ENCODE measurements at regions of chr9 and their contacts with region 1.

Region 1: GRCh38 chr9:126490871-126491567 is 122.7 kb upstream of the LMX1B start:
- DNase-seq: no peak
- ATAC-seq: peak in 1 of 2 donors; percentile 71
- H3K4me3 ChIP-seq: no peak overlapping the region
- H3K27ac ChIP-seq: no peak overlapping the region
- H3K4me1 ChIP-seq: no peaks in the 10 kb centered on the region
- H3K27me3 ChIP-seq: no peaks in the 10 kb centered on the region
- CTCF ChIP-seq: peak; percentile 87 to 92 (median 91)
- POLR2A ChIP-seq: no peak

Region 2: DNA sequence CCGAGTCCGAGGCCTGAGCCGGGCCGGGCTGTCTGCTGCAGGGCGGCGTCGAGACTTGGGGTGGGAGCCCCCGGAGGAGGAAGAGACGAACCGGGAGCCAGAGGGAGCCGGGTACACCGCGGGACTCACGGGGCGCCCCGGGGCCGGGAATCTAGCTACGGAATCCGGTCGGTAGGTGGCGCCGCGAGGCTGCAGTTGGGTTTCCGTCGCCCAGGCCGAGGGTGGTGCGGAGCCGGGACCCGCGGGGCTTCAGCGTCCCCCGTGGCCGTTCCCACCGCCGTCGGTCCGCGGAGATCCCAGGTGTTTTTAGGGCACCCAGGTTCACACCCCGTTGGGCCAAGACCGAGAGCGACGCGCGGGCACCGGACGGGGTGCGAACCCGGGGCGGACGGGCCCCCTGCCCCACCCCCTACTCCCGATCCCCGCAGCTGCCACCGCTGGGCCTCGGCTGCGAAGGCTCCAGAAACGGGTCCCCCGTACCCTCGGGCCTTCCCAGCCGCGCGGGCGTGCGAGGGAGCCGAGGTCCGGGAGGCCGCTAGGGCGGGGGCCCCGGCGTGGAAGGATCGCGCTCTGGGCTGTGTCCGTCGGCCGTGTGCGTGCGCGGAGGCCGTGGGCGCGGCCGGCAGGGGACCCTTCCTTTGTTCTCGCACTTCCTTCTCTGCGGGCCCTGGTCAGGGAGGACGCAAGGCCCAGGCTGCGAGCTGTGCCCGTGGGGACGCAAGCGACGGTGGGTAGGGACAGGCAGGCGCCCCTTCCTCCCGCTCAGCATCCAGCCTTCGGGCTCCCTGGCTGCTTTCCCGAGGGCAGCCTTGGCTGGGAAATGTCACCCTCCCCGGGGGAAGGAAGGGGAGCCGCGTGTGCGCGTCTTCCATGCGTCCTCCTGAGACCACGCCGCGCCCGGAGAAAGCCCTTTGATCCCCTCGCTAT is 1082.8 kb before region 1 on chr9:
- in situ Hi-C with region 1: loop called in 2 of 4 experiments (anchors 25 kb)
- intact Hi-C with region 1: loop called (anchors 10 kb)
- DNase-seq: peak; percentile 30 to 34
- ATAC-seq: peak; percentile 65 to 73
- H3K4me3 ChIP-seq: peak overlapping the region; percentile 50 to 59 (median 54)
- H3K27ac ChIP-seq: no peak overlapping the region
- H3K4me1 ChIP-seq: peaks cover 3 to 8% of the 10 kb centered on the region in 2 donors
- H3K27me3 ChIP-seq: peaks cover 17 to 25% (median 24%) of the 10 kb centered on the region in 3 donors
- CTCF ChIP-seq: peak; percentile 24 to 85 (median 69)
- POLR2A ChIP-seq: no peak

Region 3: GRCh38 chr9:126301985-126302603 is 188.9 kb before region 1 on chr9:
- in situ Hi-C with region 1: loop called in 3 of 4 experiments (anchors 5 to 25 kb)
- intact Hi-C with region 1: loop called (anchors 1 kb)
- DNase-seq: peak; percentile 22 to 53
- ATAC-seq: peak; percentile 60 to 71
- H3K4me3 ChIP-seq: no peak overlapping the region
- H3K27ac ChIP-seq: no peak overlapping the region
- H3K4me1 ChIP-seq: no peaks in the 10 kb centered on the region
- H3K27me3 ChIP-seq: peaks cover 0 to 5% (median 0%) of the 10 kb centered on the region in 3 donors
- CTCF ChIP-seq: peak; percentile 46 to 69 (median 62)
- POLR2A ChIP-seq: no peak

Region 4: DNA sequence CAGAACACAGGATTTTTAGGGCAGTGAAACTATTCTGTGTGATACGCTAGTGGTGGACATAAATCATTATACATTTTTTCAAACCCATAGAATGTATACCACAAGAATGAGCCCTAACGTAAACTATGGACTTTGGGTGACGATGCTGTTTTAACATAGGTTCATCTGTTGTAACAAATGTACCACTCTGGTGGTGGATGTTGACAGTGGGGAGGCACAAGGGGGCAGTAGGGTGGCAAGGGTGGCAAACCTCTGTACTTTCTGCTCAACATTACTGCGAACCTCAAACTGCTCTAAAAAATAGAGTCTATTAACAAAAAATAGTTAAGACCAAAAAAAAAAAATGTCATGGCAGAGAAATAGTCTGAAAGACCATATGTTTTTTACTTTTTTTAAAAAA is 173.5 kb before region 1 on chr9:
- in situ Hi-C with region 1: loop called in 3 of 4 experiments (anchors 10 to 25 kb)
- intact Hi-C with region 1: no loop called
- DNase-seq: peak; percentile 44 to 48
- ATAC-seq: peak; percentile 73 to 77
- H3K4me3 ChIP-seq: no peak overlapping the region
- H3K27ac ChIP-seq: no peak overlapping the region
- H3K4me1 ChIP-seq: no peaks in the 10 kb centered on the region
- H3K27me3 ChIP-seq: no peaks in the 10 kb centered on the region
- CTCF ChIP-seq: peak; percentile 52 to 71 (median 65)
- POLR2A ChIP-seq: no peak

Region 5: GRCh38 chr9:126326228-126327005 is 164.6 kb before region 1 on chr9 and contains the start of gene MVB12B:
- in situ Hi-C with region 1: loop called in 2 of 4 experiments (anchors 25 kb)
- intact Hi-C with region 1: loop called (anchors 5 kb)
- DNase-seq: peak in 1 of 2 donors; percentile 26
- ATAC-seq: peak; percentile 42 to 56
- H3K4me3 ChIP-seq: peak within 1 kb of the TSS; percentile 56 to 67 (median 60)
- H3K27ac ChIP-seq: peak within 1 kb of the TSS; percentile 90 to 97 (median 93)
- H3K4me1 ChIP-seq: peaks cover 40 to 41% of the 10 kb centered on the region in 2 donors
- H3K27me3 ChIP-seq: no peaks in the 10 kb centered on the region
- CTCF ChIP-seq: no peak
- POLR2A ChIP-seq: no peak
- total RNA-seq, gene MVB12B: 6.1 to 18.0 (median 13.2) TPM